OCI-LY7 (cell line): ENCODE measurements at regions of chr18 and their contacts with region 1.

Region 1: DNA sequence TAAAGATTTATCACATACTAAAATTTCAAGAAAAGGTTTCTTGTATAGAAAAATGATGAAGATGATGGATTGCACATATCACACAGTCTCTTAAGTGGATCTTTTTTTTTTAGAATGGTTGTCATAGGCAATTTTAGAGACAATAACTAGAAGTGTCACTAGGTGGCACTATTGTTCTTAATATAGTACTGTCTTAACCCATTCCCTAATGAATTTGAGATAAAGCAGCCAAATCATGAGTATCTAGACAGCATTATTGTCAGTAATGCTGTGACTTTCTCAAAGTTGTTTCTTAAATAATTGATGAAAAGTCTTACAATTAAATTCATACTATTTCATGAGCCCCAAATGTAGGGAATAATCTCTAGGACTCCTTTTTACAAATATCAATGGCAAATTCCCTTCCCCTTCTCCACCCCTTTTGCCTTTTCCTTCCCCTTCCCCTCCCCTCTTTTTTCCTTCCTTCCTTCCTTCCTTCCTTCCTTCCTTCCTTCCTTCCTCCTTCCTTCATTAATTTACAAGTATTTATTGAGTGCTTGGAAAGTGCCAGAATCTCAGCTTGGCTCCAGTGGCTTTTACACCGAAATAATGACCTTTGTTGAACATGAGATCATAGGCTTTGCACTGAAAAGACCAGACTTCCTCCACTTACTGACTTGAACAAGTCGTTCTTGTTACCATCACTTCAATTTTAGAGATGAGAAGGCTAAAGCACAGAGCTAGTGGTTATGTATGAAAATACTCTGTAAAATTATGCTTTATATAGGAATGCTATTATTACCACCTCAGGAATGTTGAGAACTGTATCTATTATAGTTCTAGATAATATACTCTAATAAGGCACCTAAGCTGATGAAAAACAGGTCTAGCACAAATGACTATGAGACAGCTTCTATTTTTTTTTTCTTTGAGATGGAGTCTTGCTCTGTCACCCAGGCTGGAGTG is 19.8 kb downstream of the MYL12B start:
- DNase-seq: peak; percentile 91
- H3K4me3 ChIP-seq: no peak overlapping the region
- H3K27ac ChIP-seq: peak overlapping the region; percentile 99
- H3K4me1 ChIP-seq: peaks cover 54% of the 10 kb centered on the region
- CTCF ChIP-seq: peak; percentile 91

Region 2: GRCh38 chr18:3119401-3120335 is 162.1 kb before region 1 on chr18:
- CTCF ChIA-PET with region 1: no interaction called
- POLR2A ChIA-PET with region 1: no interaction called
- intact Hi-C with region 1: no loop called
- DNase-seq: no peak
- H3K4me3 ChIP-seq: no peak overlapping the region
- H3K27ac ChIP-seq: no peak overlapping the region
- H3K4me1 ChIP-seq: no peaks in the 10 kb centered on the region
- CTCF ChIP-seq: no peak

Region 3: DNA sequence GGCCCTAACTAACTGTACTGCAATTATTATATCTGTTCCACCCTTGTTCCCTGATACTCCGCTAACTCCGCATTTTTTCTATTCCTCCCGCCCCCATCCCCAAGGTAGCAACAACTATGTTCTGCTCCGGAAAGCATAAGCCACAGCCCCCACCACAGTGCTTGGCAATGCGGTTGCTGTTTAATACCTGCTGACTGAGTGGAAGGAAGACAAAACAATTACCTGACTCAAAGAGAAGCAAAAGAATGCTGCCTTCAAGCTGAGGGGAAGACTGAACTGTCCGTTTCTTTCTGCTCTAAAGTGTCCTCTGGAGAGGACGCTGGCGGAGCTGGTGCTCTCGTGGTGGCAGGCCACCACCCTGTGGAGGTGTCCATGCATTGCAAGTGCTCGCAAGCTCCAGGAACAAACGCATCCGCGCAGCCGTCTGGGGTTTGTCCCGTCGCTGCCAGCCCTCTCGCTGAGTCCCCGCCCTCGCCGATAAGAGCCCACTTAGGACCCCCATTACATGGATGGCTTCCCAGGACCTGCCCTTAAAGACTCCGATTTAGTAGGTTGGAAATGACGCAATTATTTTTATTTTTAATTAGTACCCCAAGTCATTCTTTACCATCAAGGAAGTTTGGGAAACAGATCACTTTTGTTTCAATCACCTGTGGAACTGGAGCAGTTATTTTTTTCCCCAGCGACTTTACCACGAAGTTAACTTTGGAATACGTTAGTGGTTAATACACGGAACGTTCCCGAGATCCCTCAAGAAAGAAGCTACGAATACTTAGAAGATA is 35.7 kb before region 1 on chr18:
- CTCF ChIA-PET with region 1: no interaction called
- POLR2A ChIA-PET with region 1: interaction called, 6 read pairs
- intact Hi-C with region 1: loop called (anchors 1 kb)
- DNase-seq: peak; percentile 94
- H3K4me3 ChIP-seq: peak overlapping the region; percentile 81
- H3K27ac ChIP-seq: peak overlapping the region; percentile 84
- H3K4me1 ChIP-seq: peaks cover 43% of the 10 kb centered on the region
- CTCF ChIP-seq: peak; percentile 98

Region 4: GRCh38 chr18:3402982-3403451 is 121.3 kb after region 1 on chr18:
- CTCF ChIA-PET with region 1: no interaction called
- POLR2A ChIA-PET with region 1: no interaction called
- intact Hi-C with region 1: loop called (anchors 5 kb)
- DNase-seq: peak; percentile 68
- H3K4me3 ChIP-seq: peak overlapping the region; percentile 19
- H3K27ac ChIP-seq: peak overlapping the region; percentile 84
- H3K4me1 ChIP-seq: peaks cover 44% of the 10 kb centered on the region
- CTCF ChIP-seq: no peak

Region 5: GRCh38 chr18:3585656-3586509 is 304.2 kb after region 1 on chr18:
- CTCF ChIA-PET with region 1: no interaction called
- POLR2A ChIA-PET with region 1: interaction called, 7 read pairs
- intact Hi-C with region 1: loop called (anchors 1 kb)
- DNase-seq: peak; percentile 93
- H3K4me3 ChIP-seq: peak overlapping the region; percentile 63
- H3K27ac ChIP-seq: peak overlapping the region; percentile 99
- H3K4me1 ChIP-seq: peaks cover 73% of the 10 kb centered on the region
- CTCF ChIP-seq: peak; percentile 98

Region 6: DNA sequence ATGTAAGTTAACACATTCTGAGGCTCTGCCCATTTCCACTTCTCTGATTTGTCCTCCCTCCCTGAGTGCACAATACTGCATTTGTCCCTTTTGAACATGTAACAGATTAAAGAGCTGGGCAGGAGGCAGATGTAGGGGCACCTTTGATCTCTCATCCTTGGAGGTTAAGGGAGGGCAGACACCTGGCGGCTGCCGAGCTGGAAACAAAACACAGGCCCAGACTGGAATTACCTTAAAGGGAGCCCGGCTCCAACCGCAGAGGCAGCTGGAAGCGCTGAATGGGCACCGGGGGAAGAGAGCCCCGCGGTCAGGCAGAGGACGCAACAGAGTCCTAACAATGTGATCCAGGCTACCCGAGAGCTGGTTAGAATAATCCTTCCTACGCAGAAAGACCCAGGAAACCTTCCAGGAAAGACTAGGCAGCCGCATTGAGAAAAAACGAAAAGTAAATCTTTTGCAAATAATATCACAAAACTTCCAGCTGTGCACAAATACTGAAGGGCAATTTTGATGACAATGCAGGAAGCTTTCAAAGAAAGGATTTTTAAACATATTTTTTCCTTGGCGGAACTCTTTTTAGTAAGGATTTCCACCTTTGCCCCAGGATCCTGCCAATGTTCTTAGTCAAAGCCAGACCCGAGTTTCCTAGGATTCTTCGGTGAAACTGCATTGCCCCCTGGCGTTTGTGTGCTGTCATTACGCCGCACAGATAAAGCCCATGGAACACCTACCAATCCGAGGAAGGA is 384.2 kb after region 1 on chr18:
- CTCF ChIA-PET with region 1: interaction called, 10 read pairs
- POLR2A ChIA-PET with region 1: interaction called, 22 read pairs
- intact Hi-C with region 1: loop called (anchors 1 kb)
- DNase-seq: peak; percentile 91
- H3K4me3 ChIP-seq: peak overlapping the region; percentile 58
- H3K27ac ChIP-seq: peak overlapping the region; percentile 78
- H3K4me1 ChIP-seq: peaks cover 52% of the 10 kb centered on the region
- CTCF ChIP-seq: peak; percentile 99

Region 7: DNA sequence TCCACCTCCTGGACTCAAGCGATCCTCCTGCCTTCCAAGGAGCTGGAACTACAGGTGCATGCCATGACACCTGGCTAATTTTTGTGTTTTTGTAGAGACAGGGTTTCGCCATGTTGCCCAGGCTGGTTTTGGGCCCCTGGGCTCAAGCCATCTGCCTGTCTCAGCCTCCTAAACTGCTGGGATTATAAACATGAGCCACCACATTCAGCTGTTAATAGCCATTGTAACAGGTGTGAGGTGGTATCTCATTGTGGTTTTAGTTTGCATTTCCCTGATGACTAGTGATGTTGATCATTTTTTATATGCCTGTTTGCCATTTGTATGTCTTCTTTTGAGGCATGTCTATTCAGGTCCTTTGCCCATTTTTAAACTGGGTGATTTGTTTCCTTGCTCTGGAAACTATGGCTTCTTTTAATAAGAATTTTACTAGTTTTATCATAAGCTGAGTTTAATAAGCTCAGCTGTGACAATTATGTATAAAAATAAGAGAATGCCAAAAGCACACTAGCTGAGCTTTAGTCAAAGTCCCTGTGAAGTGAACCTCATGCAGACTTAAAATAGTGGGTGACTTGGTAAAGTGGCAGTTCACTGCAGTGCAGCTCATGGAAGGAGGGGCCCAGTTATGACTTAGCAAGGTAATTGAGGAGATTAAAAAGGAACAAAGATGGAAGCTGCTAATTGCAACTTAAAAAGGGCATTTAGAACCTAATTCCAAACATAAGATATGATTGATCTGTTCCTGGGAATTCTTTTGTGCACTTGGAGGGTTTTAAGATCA is 633.3 kb after region 1 on chr18:
- CTCF ChIA-PET with region 1: no interaction called
- POLR2A ChIA-PET with region 1: no interaction called
- intact Hi-C with region 1: loop called (anchors 2 kb)
- DNase-seq: peak; percentile 91
- H3K4me3 ChIP-seq: peak overlapping the region; percentile 43
- H3K27ac ChIP-seq: peak overlapping the region; percentile 93
- H3K4me1 ChIP-seq: peaks cover 71% of the 10 kb centered on the region
- CTCF ChIP-seq: no peak